Stomach (tissue), 19 donors: ENCODE measurements at regions of chrX and their contacts with region 1.

Region 1: DNA sequence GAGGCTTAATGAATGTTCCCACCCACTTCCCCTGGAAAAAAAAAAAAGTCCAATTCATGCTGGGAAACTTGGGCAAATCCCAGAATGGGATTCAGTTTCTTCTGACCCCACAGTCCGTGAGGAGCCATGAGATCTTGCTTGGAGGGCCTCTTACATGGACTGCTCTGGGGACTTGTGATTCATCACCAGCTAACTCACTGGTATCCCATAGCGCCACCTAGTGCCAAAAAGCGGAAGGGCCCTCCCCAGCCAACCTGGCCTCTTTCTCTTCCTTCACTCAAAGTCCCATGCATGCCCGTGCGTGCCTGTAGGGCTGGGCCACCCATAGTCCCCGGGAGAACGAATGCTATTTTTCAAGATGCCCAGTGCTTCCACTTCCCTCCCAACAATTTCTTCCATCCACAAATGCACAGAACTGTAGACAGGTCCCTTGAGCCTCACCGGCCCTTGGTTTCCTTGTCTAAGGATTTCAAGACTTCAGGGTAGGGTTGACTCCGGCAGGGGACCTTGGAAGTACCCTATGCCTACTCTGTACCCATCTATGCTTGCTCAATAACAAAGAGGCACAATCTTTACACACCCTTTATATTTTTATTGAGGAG is 5.1 kb downstream of the RTL5 start:
- DNase-seq: peak; percentile 88 to 92
- H3K4me3 ChIP-seq: no peak overlapping the region
- H3K27ac ChIP-seq: peak overlapping the region in 4 of 5 donors; percentile 57 to 67 (median 64)
- H3K4me1 ChIP-seq: peaks cover 4 to 83% (median 40%) of the 10 kb centered on the region in 4 donors
- H3K27me3 ChIP-seq: peaks cover 0 to 21% (median 0%) of the 10 kb centered on the region in 3 donors
- CTCF ChIP-seq: peak in 5 of 7 experiments; percentile 39 to 90 (median 79)
- EP300 ChIP-seq: no peak
- POLR2A ChIP-seq: no peak

Region 2: DNA sequence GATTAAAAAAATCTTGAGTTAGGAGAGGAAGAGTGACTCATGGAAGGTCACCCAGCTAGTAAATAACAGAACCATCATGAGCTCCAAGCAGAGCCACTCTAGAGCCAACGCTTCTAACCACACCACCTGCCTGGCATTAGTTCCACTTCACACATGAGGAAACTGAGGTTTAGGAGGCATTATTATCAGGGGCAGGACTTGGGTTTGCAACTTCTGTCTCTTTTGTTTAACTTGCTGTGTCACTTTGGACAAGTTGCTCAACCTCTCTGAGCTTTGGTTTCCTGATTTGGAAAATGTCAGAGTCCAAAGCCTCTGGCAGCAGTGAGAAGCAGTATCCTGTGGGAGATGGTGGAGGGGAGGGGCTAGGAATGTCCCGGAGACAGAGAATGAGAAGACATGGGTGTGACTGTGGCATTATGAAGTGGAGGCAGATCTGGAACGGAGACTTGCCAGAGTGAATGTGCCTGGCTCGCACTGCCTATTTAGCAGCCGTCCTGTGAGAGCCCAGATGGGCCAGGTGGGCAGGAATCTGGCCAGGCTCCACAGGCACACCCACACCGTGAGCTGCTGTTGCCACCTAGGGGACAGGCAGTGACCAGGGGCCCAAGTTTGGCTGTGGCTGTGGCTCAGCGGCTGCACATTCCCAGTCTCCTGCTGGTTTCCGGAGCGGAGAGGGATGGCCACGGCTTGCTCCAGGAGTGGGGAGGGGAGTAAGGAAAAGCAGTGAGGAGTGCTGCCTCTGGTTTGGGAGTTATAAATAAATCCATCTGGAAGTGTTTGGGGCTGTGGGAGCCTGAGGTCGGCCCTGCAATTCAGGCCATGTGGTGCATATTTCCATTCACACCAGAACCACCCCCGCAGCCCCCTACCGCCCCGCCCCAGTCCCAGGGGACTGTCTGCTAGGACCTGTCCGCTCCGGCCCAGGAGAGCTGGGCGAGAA is 122.6 kb before region 1 on chrX:
- intact Hi-C with region 1: loop called (anchors 10 kb)
- DNase-seq: peak; percentile 44 to 70
- H3K4me3 ChIP-seq: no peak overlapping the region
- H3K27ac ChIP-seq: peak overlapping the region in 1 of 5 donors; percentile 36
- H3K4me1 ChIP-seq: peaks cover 0 to 8% (median 3%) of the 10 kb centered on the region in 4 donors
- H3K27me3 ChIP-seq: peaks cover 0 to 17% (median 0%) of the 10 kb centered on the region in 3 donors
- CTCF ChIP-seq: peak in 1 of 7 experiments; percentile 18
- EP300 ChIP-seq: no peak
- POLR2A ChIP-seq: no peak

Region 3: DNA sequence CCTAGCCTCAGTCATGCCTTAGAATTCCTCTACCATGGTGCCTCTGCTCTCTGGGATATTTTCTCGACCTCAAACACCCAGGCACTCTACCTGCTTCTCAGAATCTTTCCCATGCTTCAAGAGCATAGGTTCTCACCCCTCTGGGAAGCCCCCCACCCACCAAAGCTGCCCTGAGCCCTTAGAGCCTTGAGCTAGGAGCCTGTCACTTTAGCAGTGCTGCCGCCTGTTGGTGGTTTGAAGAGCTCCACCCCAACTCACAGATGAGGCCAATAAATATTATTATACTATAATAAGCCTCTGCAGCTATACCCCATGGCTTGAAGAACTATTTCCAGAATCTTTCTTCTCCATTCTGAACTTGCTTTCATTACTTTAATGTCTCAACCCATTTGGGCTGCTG is 104.7 kb before region 1 on chrX:
- intact Hi-C with region 1: loop called (anchors 5 kb)
- DNase-seq: no peak
- H3K4me3 ChIP-seq: no peak overlapping the region
- H3K27ac ChIP-seq: peak overlapping the region in 1 of 5 donors; percentile 82
- H3K4me1 ChIP-seq: peaks cover 4 to 48% (median 19%) of the 10 kb centered on the region in 4 donors
- H3K27me3 ChIP-seq: peaks cover 0 to 25% (median 0%) of the 10 kb centered on the region in 3 donors
- CTCF ChIP-seq: no peak
- EP300 ChIP-seq: no peak
- POLR2A ChIP-seq: no peak